Right cardiac atrium (tissue), 5 donors: ENCODE measurements at regions of chr7 and their contacts with region 1.

Region 1: DNA sequence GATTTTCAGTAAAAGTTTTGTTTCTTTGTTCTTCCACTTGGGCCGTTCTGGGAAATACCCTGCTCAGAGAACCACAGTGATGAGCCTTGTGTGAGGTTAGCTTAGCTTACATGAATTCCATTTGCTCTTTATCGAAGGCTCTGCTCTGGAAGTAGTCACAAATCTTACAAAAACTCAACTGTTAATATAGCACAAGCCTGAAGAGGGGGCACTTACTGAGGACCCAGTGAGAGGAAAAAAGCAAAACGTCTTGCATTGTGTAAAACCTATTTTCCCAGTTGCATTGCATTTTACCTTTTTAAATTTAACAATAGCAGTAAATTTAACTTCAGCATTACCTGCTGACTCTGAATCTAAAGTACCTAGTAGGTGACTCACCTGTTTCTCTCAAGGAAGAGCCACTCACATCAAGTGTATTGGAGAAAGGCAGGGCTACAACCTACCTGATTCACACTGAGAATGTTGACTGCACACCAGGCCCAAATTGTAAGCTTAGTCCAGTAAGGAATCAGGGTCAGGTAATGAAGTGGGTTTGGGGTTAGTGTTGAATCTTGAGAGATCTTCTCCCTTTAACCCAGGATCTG is 42.3 kb downstream of the PPP1R17 start:
- DNase-seq: no peak
- ATAC-seq: no peak
- H3K4me3 ChIP-seq: no peak overlapping the region
- H3K27ac ChIP-seq: no peak overlapping the region
- H3K4me1 ChIP-seq: no peaks in the 10 kb centered on the region
- H3K27me3 ChIP-seq: no peaks in the 10 kb centered on the region

Region 2: GRCh38 chr7:31443457-31443856 is 285.8 kb before region 1 on chr7:
- intact Hi-C with region 1: loop called in 3 of 4 experiments (anchors 10 kb)
- DNase-seq: no peak
- ATAC-seq: peak; percentile 63
- H3K4me3 ChIP-seq: no peak overlapping the region
- H3K27ac ChIP-seq: no peak overlapping the region
- H3K4me1 ChIP-seq: no peaks in the 10 kb centered on the region
- H3K27me3 ChIP-seq: no peaks in the 10 kb centered on the region

Region 3: DNA sequence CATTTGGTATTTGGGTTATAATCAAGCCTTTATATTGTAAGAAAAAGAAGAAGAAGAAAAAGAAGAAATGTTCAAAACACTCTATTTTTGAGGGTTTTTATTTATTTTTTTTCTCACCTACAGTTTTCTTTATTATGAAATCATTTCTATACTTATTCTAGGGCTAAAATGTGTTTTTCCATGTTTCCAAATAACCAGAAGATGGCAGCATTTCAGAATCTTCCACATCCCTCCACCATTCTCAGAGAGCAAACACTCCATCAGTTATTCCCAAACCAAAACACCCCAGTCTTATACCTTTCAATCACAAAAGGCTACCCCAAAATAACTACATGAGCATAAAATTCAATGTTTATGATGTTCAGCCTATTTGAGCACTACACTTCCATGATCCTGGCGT is 81.0 kb before region 1 on chr7:
- intact Hi-C with region 1: loop called in 3 of 4 experiments (anchors 5 to 10 kb)
- DNase-seq: no peak
- ATAC-seq: no peak
- H3K4me3 ChIP-seq: no peak overlapping the region
- H3K27ac ChIP-seq: no peak overlapping the region
- H3K4me1 ChIP-seq: no peaks in the 10 kb centered on the region
- H3K27me3 ChIP-seq: no peaks in the 10 kb centered on the region

Region 4: DNA sequence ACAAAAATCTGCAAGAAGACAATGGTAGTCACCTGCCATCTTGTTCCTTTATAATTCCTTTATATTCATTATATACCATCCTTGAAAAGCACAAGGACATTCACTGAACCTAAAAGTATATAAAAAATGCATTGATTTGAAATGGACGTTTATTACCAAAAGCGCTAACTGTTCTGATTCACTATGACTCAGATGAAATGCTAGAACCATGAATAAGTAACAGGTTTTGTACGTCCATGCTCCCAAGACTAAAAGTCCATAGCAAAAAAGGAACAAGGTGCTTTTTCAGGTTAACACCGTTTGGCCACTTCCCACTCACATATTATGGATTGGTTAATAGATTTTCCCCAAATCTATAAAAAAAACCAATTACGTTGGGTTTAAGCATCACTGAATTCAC is 67.1 kb after region 1 on chr7:
- intact Hi-C with region 1: no loop called
- DNase-seq: no peak
- ATAC-seq: no peak
- H3K4me3 ChIP-seq: no peak overlapping the region
- H3K27ac ChIP-seq: no peak overlapping the region
- H3K4me1 ChIP-seq: peaks cover 1% of the 10 kb centered on the region
- H3K27me3 ChIP-seq: no peaks in the 10 kb centered on the region